WTC11 (cell line): ENCODE measurements at regions of chr11 and their contacts with region 1.

Region 1: DNA sequence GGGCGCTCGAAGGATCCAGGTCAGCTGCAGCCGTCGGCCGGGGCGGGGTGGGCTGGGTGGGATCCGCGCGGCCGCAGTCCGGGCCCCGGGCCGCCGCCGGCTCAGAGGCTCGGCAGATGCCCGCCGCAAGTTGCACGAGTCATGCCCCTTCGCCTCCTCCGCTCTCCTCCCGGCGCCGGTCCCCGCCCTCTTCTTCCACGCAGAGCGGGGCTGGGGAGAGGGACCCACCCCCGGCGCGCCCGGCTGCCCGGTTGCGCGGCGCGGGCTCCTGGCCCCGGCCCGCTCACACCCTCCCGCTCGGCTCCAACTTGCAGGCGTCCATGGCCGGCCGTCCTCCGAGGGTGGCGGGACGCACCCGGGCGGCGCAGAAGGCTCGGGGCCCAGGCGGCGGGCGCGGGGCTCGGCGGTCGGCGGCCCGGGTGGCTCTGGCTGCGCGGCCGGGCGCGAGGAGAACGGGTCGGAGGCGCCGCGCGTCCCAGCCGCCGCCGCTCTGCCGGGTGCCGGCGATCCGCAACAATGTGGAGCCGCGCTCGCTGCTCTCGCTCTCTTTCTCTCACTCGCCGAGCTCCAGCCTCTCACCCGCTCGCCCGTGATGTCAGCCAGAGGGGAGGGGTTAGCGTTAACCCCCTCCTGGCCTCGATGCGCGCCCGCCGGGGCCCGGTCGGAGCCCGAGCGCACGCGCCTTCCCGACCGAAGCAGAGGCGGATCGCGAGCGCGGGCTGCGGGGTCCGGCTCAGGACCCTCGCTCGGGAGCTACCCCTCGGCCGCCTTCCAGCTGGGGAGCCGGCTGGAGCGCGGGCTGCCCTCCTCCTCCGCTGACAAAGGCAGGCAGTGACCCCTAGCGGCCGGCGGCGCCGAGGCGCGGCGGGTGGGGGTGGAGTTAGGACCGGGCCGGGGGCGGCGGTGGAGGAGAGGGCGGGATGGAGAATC is at the start of gene NECTIN1:
- DNase-seq: peak; percentile 96
- ATAC-seq: peak; percentile 71
- H3K4me3 Mint-ChIP-seq: peak within 1 kb of the TSS; percentile 95
- H3K27ac Mint-ChIP-seq: peak within 1 kb of the TSS; percentile 75
- H3K4me1 Mint-ChIP-seq: peaks cover 35% of the 10 kb centered on the region
- H3K27me3 Mint-ChIP-seq: peaks cover 4% of the 10 kb centered on the region; the same call in 1 of the 2 replicates
- CTCF ChIP-seq: peak; percentile 90
- total RNA-seq, gene NECTIN1: 68.4 to 86.2 TPM (median 69.5 TPM) in 3 replicates

Region 2: DNA sequence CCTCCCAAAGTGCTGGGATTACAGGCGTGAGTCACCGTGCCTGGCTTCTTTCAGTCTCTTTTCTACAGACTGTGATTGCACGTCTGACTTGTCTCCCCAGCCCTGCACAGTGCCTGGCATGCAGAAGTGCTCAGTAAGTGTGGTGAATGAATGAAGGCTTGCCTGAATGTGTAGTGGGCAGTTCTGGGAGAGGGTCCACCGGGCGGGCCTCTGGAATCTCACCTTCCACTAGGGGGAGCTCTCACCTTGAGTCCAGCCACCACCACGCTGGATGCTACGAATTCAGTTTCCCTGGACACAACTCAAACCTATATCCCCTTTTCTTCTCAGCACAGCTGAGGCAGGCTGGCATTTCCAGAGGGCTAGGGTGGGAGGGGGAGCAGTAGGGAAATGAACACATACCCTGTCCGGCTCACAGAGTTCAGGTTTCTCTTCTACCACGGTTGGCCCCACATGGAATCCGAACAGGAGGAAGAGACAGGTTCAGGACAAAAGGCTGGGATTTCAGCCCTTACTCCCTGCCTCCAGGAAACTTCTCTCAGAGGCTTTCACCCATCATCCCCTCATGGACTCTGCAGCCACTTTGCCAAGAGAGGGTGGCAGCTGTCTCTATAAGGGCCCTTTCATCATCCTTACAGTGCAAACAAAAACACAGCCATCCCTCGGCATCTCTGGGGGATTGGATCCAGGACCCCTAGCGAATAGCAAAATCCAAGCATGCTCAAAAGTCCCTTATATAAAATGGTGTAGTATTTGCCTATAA is 86.8 kb before region 1 on chr11:
- CTCF ChIA-PET with region 1: interaction called, 17 read pairs
- POLR2A ChIA-PET with region 1: no interaction called
- DNase-seq: no peak
- ATAC-seq: peak; percentile 61
- H3K4me3 Mint-ChIP-seq: no peak overlapping the region
- H3K27ac Mint-ChIP-seq: no peak overlapping the region
- H3K4me1 Mint-ChIP-seq: peaks cover 11% of the 10 kb centered on the region
- H3K27me3 Mint-ChIP-seq: peaks cover 12% of the 10 kb centered on the region
- CTCF ChIP-seq: peak; percentile 72

Region 3: GRCh38 chr11:119684361-119685110 is 44.4 kb before region 1 on chr11:
- CTCF ChIA-PET with region 1: interaction called, 13 read pairs
- POLR2A ChIA-PET with region 1: interaction called, 3 read pairs
- DNase-seq: no peak
- ATAC-seq: peak; percentile 18; the same call in 1 of the 2 replicates
- H3K4me3 Mint-ChIP-seq: no peak overlapping the region
- H3K27ac Mint-ChIP-seq: peak overlapping the region; percentile 23; the same call in 1 of the 2 replicates
- H3K4me1 Mint-ChIP-seq: peaks cover 61% of the 10 kb centered on the region
- H3K27me3 Mint-ChIP-seq: no peaks in the 10 kb centered on the region
- CTCF ChIP-seq: no peak

Region 4: DNA sequence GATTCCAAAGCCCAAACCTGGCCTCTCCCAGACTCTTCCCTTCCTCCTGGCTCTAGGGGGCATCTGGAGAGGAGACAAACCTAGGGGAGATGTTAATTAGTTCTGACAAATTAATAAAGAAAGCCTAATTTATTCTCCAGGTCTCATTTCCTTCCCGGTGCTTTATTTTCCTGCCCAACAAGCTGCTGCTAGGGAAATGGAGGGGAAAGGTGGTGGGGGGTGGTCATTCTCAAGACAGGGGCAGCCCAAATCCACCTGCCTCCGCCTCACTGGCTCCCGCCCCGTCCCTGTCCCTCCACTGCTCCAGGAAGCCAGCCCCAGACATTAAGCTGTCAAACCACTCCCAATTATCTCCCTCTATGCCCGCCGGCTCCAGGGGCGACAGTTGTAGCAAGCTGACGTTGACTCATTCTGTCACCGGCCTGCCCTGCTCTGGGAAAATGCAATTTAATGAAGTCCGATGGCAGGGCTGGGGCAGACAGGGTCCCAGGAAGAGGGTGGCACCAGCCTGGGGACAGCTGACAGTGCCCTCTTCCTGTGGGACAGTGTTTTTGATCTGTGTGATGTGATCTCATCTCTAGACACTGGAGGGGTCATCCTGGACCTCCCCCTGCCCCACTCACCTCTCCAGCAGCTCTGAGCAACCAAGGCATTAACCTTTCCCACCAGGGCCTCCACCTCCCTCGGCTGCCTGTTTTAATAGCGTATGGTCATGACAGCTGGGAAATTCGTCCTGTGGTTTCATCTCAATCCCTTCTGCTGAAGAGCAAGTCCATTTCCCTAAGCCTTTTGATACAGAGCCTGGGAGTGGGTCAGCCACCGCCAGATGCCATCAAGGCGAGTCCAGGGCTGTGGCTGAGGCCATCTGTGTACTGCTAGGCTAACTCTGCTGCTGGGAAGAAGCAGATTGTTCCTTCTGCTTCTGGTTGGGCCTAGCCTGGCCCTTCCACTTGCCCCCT is 27.0 kb before region 1 on chr11:
- CTCF ChIA-PET with region 1: interaction called, 41 read pairs
- POLR2A ChIA-PET with region 1: interaction called, 3 read pairs
- DNase-seq: no peak
- ATAC-seq: no peak
- H3K4me3 Mint-ChIP-seq: no peak overlapping the region
- H3K27ac Mint-ChIP-seq: no peak overlapping the region
- H3K4me1 Mint-ChIP-seq: peaks cover 27% of the 10 kb centered on the region
- H3K27me3 Mint-ChIP-seq: no peaks in the 10 kb centered on the region
- CTCF ChIP-seq: no peak

Region 5: GRCh38 chr11:119741369-119742262 is 12.7 kb after region 1 on chr11:
- CTCF ChIA-PET with region 1: interaction called, 17 read pairs
- POLR2A ChIA-PET with region 1: interaction called, 7 read pairs
- DNase-seq: peak; percentile 82
- ATAC-seq: peak; percentile 75
- H3K4me3 Mint-ChIP-seq: peak overlapping the region; percentile 62
- H3K27ac Mint-ChIP-seq: no peak overlapping the region
- H3K4me1 Mint-ChIP-seq: peaks cover 14% of the 10 kb centered on the region
- H3K27me3 Mint-ChIP-seq: peaks cover 33% of the 10 kb centered on the region
- CTCF ChIP-seq: peak; percentile 88